Left ventricle myocardium superior (tissue), 1 donor: ENCODE measurements at regions of chr4 and their contacts with region 1.

Region 1: DNA sequence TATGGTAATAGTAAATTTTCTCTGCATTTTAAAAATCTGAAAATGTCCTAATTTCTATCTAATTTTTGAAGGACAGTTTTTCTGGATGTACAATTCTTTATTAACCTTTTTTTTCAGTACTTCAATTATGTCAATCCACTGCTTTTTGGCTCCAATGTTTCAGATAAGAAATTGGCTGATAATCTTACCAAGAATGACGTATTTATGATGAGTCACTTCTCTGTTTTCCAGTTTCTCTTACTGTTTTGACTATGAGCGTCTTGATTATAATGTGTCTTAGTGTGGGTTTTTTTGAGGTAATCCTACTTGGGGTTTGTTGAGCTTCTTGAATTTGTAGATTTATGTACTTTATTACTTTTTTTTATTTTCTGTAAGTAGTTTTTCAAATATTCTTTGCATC is 47.2 kb downstream of the UGT2B11 start:
- DNase-seq: no peak
- ATAC-seq: no peak

Region 2: GRCh38 chr4:68498413-68499007 is 668.8 kb before region 1 on chr4:
- intact Hi-C with region 1: loop called (anchors 10 kb)
- DNase-seq: no peak
- ATAC-seq: no peak